Naive thymus-derived CD8-positive, alpha-beta T cell (primary cell): ENCODE measurements at regions of chr4 and their contacts with region 1.

Region 1: GRCh38 chr4:145618932-145619638 is at the start of gene MMAA:
- DNase-seq: peak; percentile 89 to 96 (median 94)
- ATAC-seq: peak; percentile 93 to 94
- H3K4me3 Mint-ChIP-seq: peak within 1 kb of the TSS; percentile 95 to 99 (median 98)
- H3K27ac Mint-ChIP-seq: peak within 1 kb of the TSS; percentile 97 to 100 (median 99)
- H3K4me1 Mint-ChIP-seq: peaks cover 14 to 49% (median 46%) of the 10 kb centered on the region in 4 donors
- H3K27me3 Mint-ChIP-seq: peaks cover 0 to 6% (median 0%) of the 10 kb centered on the region in 5 donors
- polyA plus RNA-seq, gene MMAA: 8.0 to 10.0 (median 9.6) TPM

Region 2: DNA sequence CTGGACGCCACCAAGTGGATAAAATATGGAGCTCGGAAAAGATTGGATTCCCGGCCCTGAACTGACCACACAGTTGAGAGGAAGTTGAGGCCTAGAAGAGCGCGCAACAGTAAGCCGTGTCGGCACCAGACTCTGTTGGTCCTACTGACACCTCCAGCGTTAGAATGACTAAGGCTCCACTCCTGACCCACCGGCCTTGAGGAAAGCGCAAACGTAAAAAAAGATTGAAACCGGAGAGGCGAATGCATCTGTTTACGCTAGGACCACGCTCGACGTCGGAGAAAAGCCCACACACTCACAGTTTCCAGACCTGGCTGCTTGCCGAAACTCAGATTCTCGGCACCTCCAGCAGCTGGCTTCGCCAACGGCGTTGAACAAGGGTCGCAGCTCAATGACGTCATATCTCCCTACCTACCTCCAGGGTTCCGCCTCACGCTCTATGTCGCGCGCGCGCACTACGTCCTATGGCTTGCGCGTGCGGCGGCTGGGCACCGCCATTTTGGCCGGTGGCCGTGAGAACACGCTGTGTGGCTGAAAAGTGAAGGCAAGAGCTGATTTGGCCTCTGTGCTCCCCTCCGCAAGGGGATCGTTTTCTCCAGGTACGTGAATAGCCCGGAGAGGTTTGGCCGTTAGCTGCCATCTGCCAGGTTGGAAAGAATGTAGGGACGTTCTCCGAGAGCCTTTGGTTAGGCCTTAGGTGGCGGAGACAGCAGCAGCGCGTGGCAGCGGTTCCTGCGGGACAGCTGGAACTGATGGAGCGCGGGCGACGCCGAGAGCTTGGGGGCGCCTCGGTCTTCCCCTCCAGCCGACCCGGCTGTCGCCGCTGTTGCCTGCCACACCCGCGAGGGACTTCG is 521.0 kb before region 1 on chr4 and contains the starts of genes ABCE1 and ANAPC10:
- POLR2A ChIA-PET with region 1: interaction called, 11 read pairs
- DNase-seq: peak; percentile 88 to 98 (median 94)
- ATAC-seq: peak; percentile 90 to 92
- H3K4me3 Mint-ChIP-seq: peak within 1 kb of the TSS; percentile 91 to 98 (median 96)
- H3K27ac Mint-ChIP-seq: peak within 1 kb of the TSS; percentile 94 to 99 (median 98)
- H3K4me1 Mint-ChIP-seq: peaks cover 17 to 48% (median 37%) of the 10 kb centered on the region in 4 donors
- H3K27me3 Mint-ChIP-seq: no peaks in the 10 kb centered on the region
- polyA plus RNA-seq, gene ABCE1: 59.4 to 72.9 (median 68.5) TPM
- polyA plus RNA-seq, gene ANAPC10: 33.3 to 38.5 (median 35.8) TPM

Region 3: DNA sequence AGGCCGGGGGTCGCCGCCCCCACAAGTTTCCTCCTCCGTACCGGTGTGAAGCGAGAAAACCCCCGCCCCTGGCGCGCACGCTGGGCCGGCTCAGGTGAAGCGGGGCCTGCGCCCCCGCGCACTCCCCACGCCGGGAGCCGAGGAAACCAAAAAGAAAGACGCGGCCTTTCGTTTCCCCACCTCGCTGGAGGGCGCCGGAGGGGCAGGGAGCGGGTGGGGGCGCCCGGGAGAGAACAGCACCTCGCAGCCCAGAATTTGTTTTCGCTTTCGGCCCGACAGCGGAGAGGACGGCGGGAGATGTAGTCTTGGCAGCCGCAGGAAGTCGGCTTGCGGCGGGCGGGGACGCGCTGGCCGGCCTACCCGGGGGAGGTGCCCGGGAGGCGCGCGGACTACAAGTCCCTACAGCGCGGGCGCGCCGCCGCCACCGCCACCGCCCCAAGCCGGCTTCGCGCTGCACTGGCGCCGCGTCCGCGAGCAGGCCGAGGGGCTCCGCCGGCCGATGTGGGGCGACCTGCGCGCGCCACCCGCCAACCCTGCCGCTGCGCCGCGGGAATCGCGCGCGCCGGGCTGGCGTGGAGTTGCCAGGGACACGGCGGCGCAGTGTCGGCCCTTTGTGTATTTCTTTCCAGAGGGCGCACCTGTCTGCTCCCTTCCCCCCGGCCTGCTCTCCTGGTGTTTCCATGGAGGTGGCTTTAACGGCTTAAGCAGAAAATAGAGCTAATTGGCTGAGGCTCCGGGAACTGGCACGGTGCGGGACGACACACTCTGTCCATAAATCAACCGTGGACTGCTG is 438.6 kb before region 1 on chr4 and contains the start of gene OTUD4:
- POLR2A ChIA-PET with region 1: interaction called, 19 read pairs
- DNase-seq: peak; percentile 92 to 97 (median 96)
- ATAC-seq: peak; percentile 80 to 84
- H3K4me3 Mint-ChIP-seq: peak within 1 kb of the TSS; percentile 83 to 96 (median 92)
- H3K27ac Mint-ChIP-seq: peak within 1 kb of the TSS; percentile 90 to 98 (median 97)
- H3K4me1 Mint-ChIP-seq: peaks cover 16 to 47% (median 33%) of the 10 kb centered on the region in 4 donors
- H3K27me3 Mint-ChIP-seq: peaks cover 0 to 2% (median 0%) of the 10 kb centered on the region in 5 donors
- polyA plus RNA-seq, gene OTUD4: 14.7 to 17.9 (median 14.9) TPM

Region 4: DNA sequence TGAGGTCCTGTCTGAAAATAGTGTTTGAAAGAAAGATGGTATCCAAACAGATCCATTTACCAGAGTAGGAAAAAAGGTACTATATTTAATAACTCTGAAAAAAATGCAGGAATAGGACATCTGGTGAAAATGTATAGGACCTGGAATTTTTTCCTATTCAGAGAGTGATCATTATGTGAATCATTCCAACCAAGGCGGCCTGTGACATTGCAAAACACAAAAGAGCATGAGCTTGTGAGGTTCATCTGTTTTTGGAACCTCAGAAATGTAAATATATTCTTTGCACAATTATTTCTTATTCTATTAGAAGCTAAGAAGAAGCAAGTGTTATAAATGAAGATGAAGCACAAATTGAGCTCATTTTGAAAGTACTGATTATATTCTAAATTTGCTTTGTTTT is 62.9 kb after region 1 on chr4:
- POLR2A ChIA-PET with region 1: no interaction called
- DNase-seq: no peak
- ATAC-seq: no peak
- H3K4me3 Mint-ChIP-seq: no peak overlapping the region
- H3K27ac Mint-ChIP-seq: no peak overlapping the region
- H3K4me1 Mint-ChIP-seq: no peaks in the 10 kb centered on the region
- H3K27me3 Mint-ChIP-seq: peaks cover 2 to 26% (median 11%) of the 10 kb centered on the region in 5 donors